ENCODE measurements at regions of chr7 and their contacts with region 1.

Region 1: DNA sequence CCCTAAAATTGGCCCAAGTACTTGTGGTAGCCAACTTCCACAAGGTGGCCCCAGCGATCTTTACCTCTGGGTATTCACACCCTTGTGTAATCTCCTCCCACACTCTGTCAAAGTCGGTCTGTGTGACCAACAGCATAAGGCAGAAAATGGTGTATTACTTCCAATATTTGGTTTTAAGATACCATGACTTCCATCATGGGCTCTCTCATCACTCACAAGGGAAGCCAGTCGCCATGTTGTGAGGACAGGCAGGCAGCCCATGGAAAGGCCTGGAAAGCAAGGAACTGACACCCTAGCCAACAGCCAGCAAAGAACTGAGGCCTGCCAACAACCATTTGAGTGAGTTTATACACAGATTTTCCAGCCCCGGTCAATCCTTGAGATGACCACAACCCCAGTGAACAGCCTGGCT is 91.0 kb upstream of the KMT2E start:
- DNase-seq: peak; percentile 81 to 89 (median 86)
- H3K4me3 ChIP-seq: no peak overlapping the region
- H3K4me3 Mint-ChIP-seq: no peak overlapping the region
- H3K27ac ChIP-seq: no peak overlapping the region
- H3K27ac Mint-ChIP-seq: peak overlapping the region in 4 of 7 donors; percentile 28 to 68 (median 52)
- H3K4me1 ChIP-seq: peaks cover 0 to 2% of the 10 kb centered on the region in 2 donors
- H3K4me1 Mint-ChIP-seq: peaks cover 4% of the 10 kb centered on the region
- H3K27me3 ChIP-seq: no peaks in the 10 kb centered on the region
- H3K27me3 Mint-ChIP-seq: no peaks in the 10 kb centered on the region
- CTCF ChIP-seq: peak; percentile 78

Region 2: DNA sequence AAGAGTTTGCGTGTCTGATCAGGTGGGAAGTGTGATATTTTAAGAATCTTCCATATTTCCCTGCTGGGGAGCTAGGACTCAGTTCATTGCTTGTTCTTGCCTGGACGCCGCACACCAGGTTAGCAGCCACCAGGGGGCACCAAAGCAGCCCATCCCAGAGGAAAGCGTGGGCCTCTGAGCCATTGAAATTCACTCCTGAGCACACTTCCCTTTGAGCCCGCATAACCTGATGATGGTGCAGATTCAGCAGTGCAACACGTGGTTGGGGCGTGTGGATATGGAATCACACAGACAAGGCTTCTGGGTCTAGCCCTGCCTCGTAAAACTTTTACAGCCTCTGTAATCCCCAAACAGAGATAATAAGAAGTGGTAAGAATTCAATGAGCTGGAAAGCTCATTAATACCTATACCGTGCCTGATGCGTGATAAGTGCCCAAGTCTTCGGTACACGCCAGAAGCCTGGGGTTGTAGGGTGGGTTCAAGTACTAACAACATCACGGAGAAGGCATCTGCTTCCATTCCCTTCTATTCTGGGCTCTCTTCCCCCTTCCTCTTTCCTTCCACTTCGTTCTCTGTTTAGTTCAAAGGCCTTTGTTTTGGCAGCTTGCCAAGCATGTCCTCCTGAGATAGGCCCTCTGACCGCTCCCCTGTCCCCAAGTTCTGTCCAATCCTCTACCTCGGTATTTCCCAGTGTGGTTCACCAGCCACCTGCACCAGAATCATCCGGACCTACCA is 39.1 kb before region 1 on chr7:
- intact Hi-C with region 1: loop called (anchors 1 to 2 kb)
- DNase-seq: peak; percentile 80 to 83 (median 81)
- H3K4me3 ChIP-seq: peak overlapping the region in 2 of 3 experiments; percentile 49 to 65
- H3K4me3 Mint-ChIP-seq: peak overlapping the region; percentile 63 to 64
- H3K27ac ChIP-seq: peak overlapping the region in 1 of 2 donors; percentile 35
- H3K27ac Mint-ChIP-seq: peak overlapping the region in 5 of 7 donors; percentile 52 to 86 (median 76)
- H3K4me1 ChIP-seq: peaks cover 6 to 12% of the 10 kb centered on the region in 2 donors
- H3K4me1 Mint-ChIP-seq: peaks cover 10% of the 10 kb centered on the region
- H3K27me3 ChIP-seq: no peaks in the 10 kb centered on the region
- H3K27me3 Mint-ChIP-seq: peaks cover 0 to 4% (median 2%) of the 10 kb centered on the region in 3 donors
- CTCF ChIP-seq: peak; percentile 94

Region 3: DNA sequence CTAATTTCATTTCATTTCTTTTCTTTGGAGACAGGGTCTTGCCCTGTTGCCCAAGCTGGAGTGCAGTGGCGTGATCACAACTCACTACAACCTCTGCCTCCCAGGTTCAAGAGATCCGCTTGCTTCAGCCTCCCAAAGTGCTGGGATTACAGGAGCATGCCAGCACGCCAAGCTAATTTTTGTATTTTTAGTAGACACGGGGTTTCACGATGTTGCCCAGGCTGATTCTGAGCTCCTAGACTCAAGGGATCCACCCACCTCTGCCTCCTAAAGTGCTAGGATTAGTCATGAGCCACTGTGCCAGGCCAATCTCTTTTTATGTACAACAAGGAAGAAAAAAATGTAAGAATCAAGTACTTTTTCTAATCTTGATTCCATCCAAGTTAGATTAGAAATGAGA is 80.3 kb after region 1 on chr7:
- intact Hi-C with region 1: no loop called
- DNase-seq: no peak
- H3K4me3 ChIP-seq: no peak overlapping the region
- H3K4me3 Mint-ChIP-seq: no peak overlapping the region
- H3K27ac ChIP-seq: peak overlapping the region; percentile 10 to 69
- H3K27ac Mint-ChIP-seq: peak overlapping the region; percentile 13 to 85 (median 66)
- H3K4me1 ChIP-seq: peaks cover 16 to 45% of the 10 kb centered on the region in 2 donors
- H3K4me1 Mint-ChIP-seq: peaks cover 52% of the 10 kb centered on the region
- H3K27me3 ChIP-seq: no peaks in the 10 kb centered on the region
- H3K27me3 Mint-ChIP-seq: peaks cover 0 to 2% (median 0%) of the 10 kb centered on the region in 3 donors
- CTCF ChIP-seq: no peak

Region 4: GRCh38 chr7:105067691-105068090 is 144.7 kb after region 1 on chr7:
- intact Hi-C with region 1: no loop called
- DNase-seq: no peak
- H3K4me3 ChIP-seq: no peak overlapping the region
- H3K4me3 Mint-ChIP-seq: no peak overlapping the region
- H3K27ac ChIP-seq: peak overlapping the region in 1 of 2 donors; percentile 34
- H3K27ac Mint-ChIP-seq: peak overlapping the region in 1 of 7 donors; percentile 46
- H3K4me1 ChIP-seq: no peaks in the 10 kb centered on the region
- H3K4me1 Mint-ChIP-seq: no peaks in the 10 kb centered on the region
- H3K27me3 ChIP-seq: no peaks in the 10 kb centered on the region
- H3K27me3 Mint-ChIP-seq: no peaks in the 10 kb centered on the region
- CTCF ChIP-seq: no peak

Measured in CD14-positive monocyte (primary cell).